ENCODE measurements at regions of chr17 and their contacts with region 1.

Region 1: DNA sequence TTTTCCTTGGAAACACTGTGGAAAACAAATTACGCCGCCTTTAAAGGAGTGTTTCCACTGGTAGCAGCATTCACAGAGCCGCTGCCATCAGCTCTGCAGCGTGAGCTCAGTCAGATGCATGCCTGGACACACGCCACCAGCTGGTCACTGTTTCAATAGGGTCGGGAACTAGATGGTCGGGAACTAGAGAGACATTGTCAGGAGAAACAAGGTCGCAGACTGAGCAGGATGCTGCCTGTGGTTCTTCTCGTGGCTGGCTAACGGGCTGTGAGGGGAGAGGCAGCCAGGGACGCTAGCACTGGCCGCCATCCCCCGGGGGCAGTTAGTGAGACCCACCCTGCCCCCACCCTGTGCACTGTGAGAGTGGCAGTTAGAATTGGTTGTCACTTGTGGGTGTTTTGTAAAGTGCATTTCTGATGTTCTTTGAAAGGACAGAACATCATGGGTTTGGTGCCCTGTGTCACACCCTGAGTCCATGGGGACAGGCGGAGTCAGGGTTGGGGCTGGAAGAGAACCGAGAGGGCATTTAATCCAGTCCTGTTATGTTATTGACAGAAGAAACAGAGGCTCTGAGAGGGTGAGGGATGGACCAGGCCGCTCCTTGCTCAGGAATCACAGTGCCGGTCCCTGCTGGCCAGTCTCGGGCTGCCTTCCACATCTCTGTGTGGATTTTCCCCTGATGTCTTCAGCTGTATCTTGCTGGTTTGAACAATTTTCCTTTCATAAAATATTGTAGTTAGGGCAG is 86.3 kb downstream of the SPECC1 start:
- DNase-seq: peak in 2 of 4 experiments; percentile 18 to 38
- ATAC-seq: peak; percentile 82
- H3K4me3 ChIP-seq: no peak overlapping the region
- H3K27ac ChIP-seq: no peak overlapping the region
- H3K4me1 ChIP-seq: no peaks in the 10 kb centered on the region; a peak in 1 of 5 replicates
- H3K27me3 ChIP-seq: no peaks in the 10 kb centered on the region
- CTCF ChIP-seq: peak; percentile 35 to 49 (median 42); a peak in 5 of 6 replicates
- EP300 ChIP-seq: no peak
- POLR2A ChIP-seq: no peak
- RAD21 ChIP-seq: peak in 1 of 2 experiments; percentile 41; a peak in 2 of 4 replicates

Region 2: DNA sequence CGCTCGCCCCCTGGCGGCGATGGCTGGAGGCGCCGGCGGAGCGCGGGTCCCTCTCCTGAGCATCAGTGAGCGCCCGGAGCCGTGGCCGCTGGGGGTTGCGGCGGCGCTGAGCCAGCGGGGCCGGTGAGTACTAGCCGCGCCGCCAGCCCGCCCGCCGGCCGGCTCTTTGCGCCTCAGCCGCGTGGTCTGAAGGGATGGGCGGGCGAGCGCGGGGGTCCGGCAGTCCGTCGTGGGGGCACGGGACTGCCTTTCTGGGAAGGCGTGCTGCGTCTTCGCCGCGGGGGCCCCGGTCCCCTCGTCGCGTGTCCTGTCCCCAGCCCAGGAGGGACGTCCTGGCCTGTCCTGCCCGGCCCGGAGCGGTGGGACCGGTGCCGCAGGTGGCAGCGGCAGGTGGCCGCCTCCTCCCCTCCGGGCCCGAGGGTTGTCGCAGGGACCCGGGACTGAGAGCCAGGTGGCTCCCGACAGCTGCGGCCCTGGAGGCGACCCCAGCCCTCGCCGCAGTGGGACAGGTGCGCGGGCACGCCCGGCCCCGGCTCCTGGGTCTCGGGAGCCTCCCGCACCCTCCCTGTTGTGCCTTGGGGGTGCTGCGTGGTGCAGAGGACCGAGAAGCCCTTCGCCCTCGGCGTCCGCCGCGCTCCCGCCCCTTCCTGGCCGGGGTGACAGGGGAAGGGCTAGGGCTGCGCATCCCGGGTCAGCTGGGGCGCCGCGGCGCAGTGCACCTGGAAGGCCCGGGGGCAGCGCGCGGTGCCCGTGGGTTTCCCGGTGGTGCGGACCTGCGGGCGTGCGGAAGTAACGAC is 86.0 kb before region 1 on chr17 and contains the start of gene SPECC1:
- CTCF ChIA-PET with region 1: no interaction called
- POLR2A ChIA-PET with region 1: no interaction called
- in situ Hi-C with region 1: no loop called
- intact Hi-C with region 1: loop called (anchors 10 kb)
- DNase-seq: peak; percentile 28 to 87 (median 78)
- ATAC-seq: peak; percentile 91
- H3K4me3 ChIP-seq: peak within 1 kb of the TSS; percentile 63
- H3K27ac ChIP-seq: peak within 1 kb of the TSS; percentile 74
- H3K4me1 ChIP-seq: peaks cover 0 to 20% of the 10 kb centered on the region in 2 experiments; a peak in 4 of 5 replicates
- H3K27me3 ChIP-seq: no peaks in the 10 kb centered on the region
- CTCF ChIP-seq: peak in 2 of 3 experiments; percentile 91 to 96; a peak in 5 of 6 replicates
- EP300 ChIP-seq: no peak
- POLR2A ChIP-seq: peak; percentile 34; the same call in 1 of the 2 replicates
- RAD21 ChIP-seq: peak in 1 of 2 experiments; percentile 39; a peak in 2 of 4 replicates
- polyA plus RNA-seq, gene SPECC1: 2.4 to 3.0 TPM

Region 3: DNA sequence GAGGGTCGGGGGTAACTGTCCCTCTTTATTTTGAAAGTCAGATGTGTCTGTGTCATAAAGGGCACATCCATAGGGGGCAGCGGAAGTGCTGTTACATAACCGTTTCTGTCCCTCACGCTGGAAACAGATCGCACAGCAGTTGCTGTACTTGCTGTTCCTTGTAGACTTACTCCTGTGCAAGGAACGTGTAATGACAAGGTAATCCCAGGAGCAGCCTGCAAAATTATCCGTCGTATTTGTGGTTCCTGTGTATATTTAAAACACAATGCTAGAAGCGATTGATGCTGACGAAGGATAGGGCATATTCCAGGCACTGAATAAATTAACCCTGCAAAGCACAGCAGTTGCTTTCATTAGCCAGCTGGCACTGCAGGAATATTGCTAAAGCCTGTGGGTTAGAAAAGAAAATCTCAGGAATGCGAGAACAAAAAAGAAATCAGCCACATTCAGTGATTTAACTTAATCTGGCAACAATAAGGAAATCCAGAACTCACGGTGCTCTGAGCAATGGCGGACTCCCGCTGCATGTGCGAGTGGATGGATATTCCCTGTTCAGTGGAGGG is 10.1 kb before region 1 on chr17:
- CTCF ChIA-PET with region 1: no interaction called
- POLR2A ChIA-PET with region 1: no interaction called
- in situ Hi-C with region 1: no loop called
- intact Hi-C with region 1: no loop called
- DNase-seq: no peak
- ATAC-seq: no peak
- H3K4me3 ChIP-seq: no peak overlapping the region
- H3K27ac ChIP-seq: no peak overlapping the region
- H3K4me1 ChIP-seq: no peaks in the 10 kb centered on the region; a peak in 2 of 5 replicates
- H3K27me3 ChIP-seq: no peaks in the 10 kb centered on the region
- CTCF ChIP-seq: no peak
- EP300 ChIP-seq: no peak
- POLR2A ChIP-seq: no peak
- RAD21 ChIP-seq: no peak

Measured in K562 (cell line).